Thyroid gland (tissue), 4 donors: ENCODE measurements at regions of chr3 and their contacts with region 1.

Region 1: DNA sequence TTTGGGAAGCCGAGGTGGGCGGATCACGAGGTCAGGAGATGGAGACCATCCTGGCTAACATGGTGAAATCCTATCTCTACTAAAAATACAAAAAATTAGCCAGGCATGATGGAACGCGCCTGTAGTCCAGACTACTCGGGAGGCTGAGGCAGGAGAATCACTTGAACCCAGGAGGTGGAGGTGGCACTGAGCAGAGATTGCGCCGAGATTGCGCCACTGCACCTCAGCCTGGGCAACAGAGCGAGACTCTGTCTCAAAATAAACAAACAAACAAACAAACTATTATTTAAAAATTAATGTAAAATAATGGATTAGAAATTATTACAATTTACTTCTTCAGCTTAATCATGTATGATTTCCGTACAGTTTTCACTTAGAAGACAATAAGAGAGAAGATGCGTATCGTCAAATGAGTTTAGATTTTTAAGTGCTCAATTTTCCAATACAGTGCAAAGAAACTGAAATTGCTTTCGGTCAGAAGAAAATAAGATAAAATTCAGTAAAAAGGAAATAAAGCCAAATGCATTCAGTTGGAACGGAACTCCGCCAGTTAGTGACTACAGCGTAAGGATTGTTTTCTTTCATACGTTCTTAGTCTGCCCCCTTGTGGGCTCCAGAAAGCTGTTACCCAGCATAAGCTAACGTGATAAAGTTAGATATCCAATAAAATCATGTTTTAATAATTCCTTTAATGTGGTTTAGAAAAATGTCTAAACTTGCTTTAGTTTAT is 24.8 kb downstream of the AADAC start:
- DNase-seq: peak; percentile 37 to 55
- H3K4me3 ChIP-seq: no peak overlapping the region
- H3K27ac ChIP-seq: no peak overlapping the region
- H3K4me1 ChIP-seq: peaks cover 0 to 11% of the 10 kb centered on the region in 2 donors
- H3K27me3 ChIP-seq: no peaks in the 10 kb centered on the region
- CTCF ChIP-seq: peak; percentile 67 to 86 (median 75)
- POLR2A ChIP-seq: no peak

Region 2: GRCh38 chr3:151265866-151266265 is 572.9 kb before region 1 on chr3:
- intact Hi-C with region 1: no loop called
- DNase-seq: no peak
- H3K4me3 ChIP-seq: no peak overlapping the region
- H3K27ac ChIP-seq: no peak overlapping the region
- H3K4me1 ChIP-seq: no peaks in the 10 kb centered on the region
- H3K27me3 ChIP-seq: no peaks in the 10 kb centered on the region
- CTCF ChIP-seq: no peak
- POLR2A ChIP-seq: no peak

Region 3: GRCh38 chr3:151439652-151440129 is 399.1 kb before region 1 on chr3:
- intact Hi-C with region 1: loop called (anchors 5 kb)
- DNase-seq: no peak
- H3K4me3 ChIP-seq: no peak overlapping the region
- H3K27ac ChIP-seq: no peak overlapping the region
- H3K4me1 ChIP-seq: no peaks in the 10 kb centered on the region
- H3K27me3 ChIP-seq: no peaks in the 10 kb centered on the region
- CTCF ChIP-seq: peak; percentile 45 to 81 (median 72)
- POLR2A ChIP-seq: no peak